Activated CD4-positive, alpha-beta T cell treated with anti-CD3 and anti-CD28 coated beads, Interleukin-2, amount 10 ng/mL, durations not matched to agents 24 days and 14 days (primary cell): ENCODE measurements at regions of chr14 and their contacts with region 1.

Region 1: GRCh38 chr14:45134051-45134958 is at the start of gene FKBP3:
- DNase-seq: peak; percentile 97
- H3K4me3 Mint-ChIP-seq: peak within 1 kb of the TSS; percentile 98
- H3K27ac Mint-ChIP-seq: peak within 1 kb of the TSS; percentile 96
- H3K4me1 Mint-ChIP-seq: peaks cover 30% of the 10 kb centered on the region
- H3K27me3 Mint-ChIP-seq: no peaks in the 10 kb centered on the region
- total RNA-seq, gene FKBP3: 62.4 and 65.4 TPM in 2 replicates

Region 2: GRCh38 chr14:44897045-44897844 is 237.1 kb before region 1 on chr14:
- intact Hi-C with region 1: loop called (anchors 1 kb)
- DNase-seq: peak; percentile 96
- H3K4me3 Mint-ChIP-seq: peak overlapping the region; percentile 86
- H3K27ac Mint-ChIP-seq: peak overlapping the region; percentile 93
- H3K4me1 Mint-ChIP-seq: peaks cover 10% of the 10 kb centered on the region
- H3K27me3 Mint-ChIP-seq: no peaks in the 10 kb centered on the region

Region 3: DNA sequence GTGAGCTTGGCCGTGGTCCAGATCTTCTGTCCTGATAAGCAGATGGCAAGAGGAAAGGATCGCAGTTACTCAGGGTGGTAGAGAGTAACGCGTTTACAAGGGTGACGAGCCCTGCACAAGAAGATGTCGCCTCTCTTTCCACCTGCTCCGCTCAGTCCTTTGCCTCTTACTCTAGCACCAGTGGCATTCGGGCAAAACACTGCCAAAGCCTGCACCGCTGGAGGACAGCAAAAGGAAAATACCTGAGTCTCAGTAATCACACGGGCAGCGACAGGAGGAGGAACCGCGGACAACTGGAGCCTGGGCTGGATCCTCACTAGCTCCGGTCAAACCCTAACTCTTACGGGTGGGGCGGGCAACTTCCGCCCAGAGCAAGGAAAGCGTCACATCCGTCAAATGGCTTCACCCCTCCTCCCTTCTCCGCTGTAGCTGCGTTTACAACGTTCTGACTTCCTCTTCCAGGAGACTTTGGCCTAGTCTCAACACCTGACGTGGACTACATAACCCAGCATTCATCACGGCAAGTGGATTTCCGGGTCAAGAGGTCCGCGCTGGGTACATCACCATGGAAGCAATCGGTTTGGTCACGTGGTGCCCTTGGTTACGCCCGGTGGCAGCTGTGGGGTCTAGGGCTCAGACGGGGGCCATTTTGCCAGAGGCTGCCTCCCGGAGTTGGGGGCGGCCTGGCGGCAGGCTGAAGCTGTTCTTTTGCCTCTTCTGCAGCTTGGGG is 172.5 kb before region 1 on chr14 and contains the starts of genes KLHL28 and TOGARAM1:
- intact Hi-C with region 1: loop called (anchors 1 kb)
- DNase-seq: peak; percentile 99
- H3K4me3 Mint-ChIP-seq: no peak within 1 kb of the TSS
- H3K27ac Mint-ChIP-seq: no peak within 1 kb of the TSS
- H3K4me1 Mint-ChIP-seq: peaks cover 41% of the 10 kb centered on the region
- H3K27me3 Mint-ChIP-seq: no peaks in the 10 kb centered on the region
- total RNA-seq, gene KLHL28: 14.7 and 14.9 TPM in 2 replicates
- total RNA-seq, gene TOGARAM1: 7.6 and 7.9 TPM in 2 replicates

Region 4: GRCh38 chr14:45089813-45090212 is 44.5 kb before region 1 on chr14:
- intact Hi-C with region 1: loop called (anchors 1 kb)
- DNase-seq: no peak
- H3K4me3 Mint-ChIP-seq: peak overlapping the region; percentile 27
- H3K27ac Mint-ChIP-seq: peak overlapping the region; percentile 78
- H3K4me1 Mint-ChIP-seq: peaks cover 47% of the 10 kb centered on the region
- H3K27me3 Mint-ChIP-seq: no peaks in the 10 kb centered on the region

Region 5: GRCh38 chr14:45194964-45195363 is 60.7 kb after region 1 on chr14:
- intact Hi-C with region 1: loop called (anchors 2 kb)
- DNase-seq: no peak
- H3K4me3 Mint-ChIP-seq: no peak overlapping the region
- H3K27ac Mint-ChIP-seq: peak overlapping the region; percentile 70
- H3K4me1 Mint-ChIP-seq: peaks cover 9% of the 10 kb centered on the region
- H3K27me3 Mint-ChIP-seq: no peaks in the 10 kb centered on the region

Region 6: DNA sequence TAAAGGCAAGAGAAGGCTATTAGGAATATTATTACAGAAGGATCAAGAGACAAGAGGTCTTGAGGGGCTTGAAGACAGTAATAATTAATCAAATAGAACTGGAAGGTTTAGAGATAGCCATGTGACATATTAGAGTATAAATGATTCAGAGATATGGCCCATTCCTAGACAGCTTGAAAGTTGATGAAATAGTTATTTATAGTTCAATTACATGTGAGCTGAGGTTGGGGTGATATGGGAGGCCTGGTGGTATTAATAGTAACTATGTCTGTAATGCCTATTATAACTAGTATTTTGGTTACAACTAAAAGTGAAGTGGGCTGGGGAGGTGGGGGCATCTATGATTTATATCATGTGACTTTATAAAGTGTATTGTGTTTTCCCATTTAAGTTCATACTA is 132.8 kb after region 1 on chr14:
- intact Hi-C with region 1: loop called (anchors 1 kb)
- DNase-seq: no peak
- H3K4me3 Mint-ChIP-seq: no peak overlapping the region
- H3K27ac Mint-ChIP-seq: no peak overlapping the region
- H3K4me1 Mint-ChIP-seq: peaks cover 5% of the 10 kb centered on the region
- H3K27me3 Mint-ChIP-seq: peaks cover 15% of the 10 kb centered on the region